ENCODE measurements at regions of chr4 and their contacts with region 1.

Region 1: DNA sequence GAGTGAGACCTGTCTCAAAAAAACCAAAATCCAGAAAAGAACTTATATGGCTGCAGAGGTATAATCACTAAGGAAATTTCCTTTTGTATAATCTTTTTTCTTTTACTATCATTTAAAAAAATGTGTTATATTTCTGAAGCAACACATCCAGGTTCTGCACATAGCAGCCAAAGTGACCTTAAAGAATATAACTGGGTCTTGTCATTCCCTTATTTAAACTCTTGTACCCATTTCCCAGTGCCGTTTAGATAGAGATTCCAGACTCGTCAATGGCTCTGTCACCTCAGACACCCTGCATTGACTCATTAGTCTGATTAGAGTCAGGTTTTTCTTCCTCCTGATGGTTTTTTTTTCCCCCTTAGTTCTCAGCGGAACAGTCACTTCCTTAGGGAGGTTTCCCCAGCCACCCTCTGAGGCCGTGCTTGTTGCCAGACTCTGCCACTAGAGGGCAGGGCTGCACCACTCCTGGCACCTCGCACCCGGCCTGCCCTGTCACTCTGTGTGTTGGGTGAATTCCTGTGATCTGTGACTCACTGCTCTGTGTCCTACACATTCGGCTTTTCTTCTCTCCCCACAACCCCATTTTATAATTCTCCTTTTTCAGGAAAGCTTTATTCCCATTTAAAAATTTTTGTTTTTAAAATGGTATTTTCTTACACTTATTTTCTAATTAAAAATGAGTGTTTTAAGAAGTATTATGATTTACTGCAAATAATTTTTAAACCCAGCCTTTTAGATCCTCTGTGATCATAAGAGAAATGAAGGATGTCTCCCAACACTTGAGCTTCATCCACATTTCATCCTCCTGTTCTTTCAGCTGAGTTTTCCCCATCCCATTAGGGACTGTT is 32.1 kb downstream of the HTT start:
- DNase-seq: peak; percentile 93
- ATAC-seq: peak; percentile 100
- H3K4me3 Mint-ChIP-seq: no peak overlapping the region
- H3K27ac Mint-ChIP-seq: peak overlapping the region; percentile 62
- H3K4me1 Mint-ChIP-seq: peaks cover 22% of the 10 kb centered on the region
- H3K27me3 Mint-ChIP-seq: no peaks in the 10 kb centered on the region
- CTCF ChIP-seq: peak; percentile 94

Region 2: GRCh38 chr4:3122081-3122563 is 15.6 kb after region 1 on chr4:
- CTCF ChIA-PET with region 1: interaction called, 31 read pairs
- POLR2A ChIA-PET with region 1: interaction called, 3 read pairs
- intact Hi-C with region 1: no loop called
- DNase-seq: no peak
- ATAC-seq: no peak
- H3K4me3 Mint-ChIP-seq: no peak overlapping the region
- H3K27ac Mint-ChIP-seq: peak overlapping the region; percentile 18
- H3K4me1 Mint-ChIP-seq: peaks cover 17% of the 10 kb centered on the region
- H3K27me3 Mint-ChIP-seq: no peaks in the 10 kb centered on the region
- CTCF ChIP-seq: no peak

Region 3: GRCh38 chr4:3136453-3136852 is 29.9 kb after region 1 on chr4:
- CTCF ChIA-PET with region 1: interaction called, 24 read pairs
- POLR2A ChIA-PET with region 1: interaction called, 3 read pairs
- intact Hi-C with region 1: no loop called
- DNase-seq: no peak
- ATAC-seq: no peak
- H3K4me3 Mint-ChIP-seq: no peak overlapping the region
- H3K27ac Mint-ChIP-seq: no peak overlapping the region
- H3K4me1 Mint-ChIP-seq: no peaks in the 10 kb centered on the region
- H3K27me3 Mint-ChIP-seq: no peaks in the 10 kb centered on the region
- CTCF ChIP-seq: peak; percentile 35

Region 4: DNA sequence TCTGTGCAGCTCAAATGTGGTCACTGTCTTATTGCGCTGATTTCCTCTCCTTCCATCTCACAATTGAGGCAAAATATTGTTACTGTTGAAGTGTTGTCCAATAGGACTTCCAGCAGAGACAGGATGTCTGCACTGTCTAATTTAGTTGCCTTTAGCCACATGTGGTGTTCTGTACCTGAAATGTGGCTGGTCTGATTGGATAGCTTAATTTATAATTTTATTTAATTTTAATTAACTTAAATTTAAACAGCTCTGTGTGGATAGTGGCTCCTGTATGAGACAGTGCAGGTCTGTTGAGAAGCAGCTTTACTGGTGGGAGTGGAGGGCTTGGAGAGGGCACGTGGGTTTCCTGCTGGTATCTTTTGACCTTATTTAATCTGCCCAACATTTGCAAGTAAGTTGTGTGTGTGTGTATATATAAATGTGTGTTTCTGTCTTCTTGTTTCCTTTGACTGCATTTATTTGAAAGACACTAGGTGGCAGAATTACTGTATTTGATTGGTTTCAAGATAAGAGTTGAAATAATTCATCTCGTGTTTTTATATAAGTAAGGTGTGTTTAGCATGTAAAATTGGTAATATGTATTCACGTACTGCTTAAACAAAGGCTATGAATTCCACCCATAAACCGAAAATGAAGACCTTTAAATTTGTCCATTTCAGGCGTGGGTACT is 87.1 kb after region 1 on chr4:
- CTCF ChIA-PET with region 1: interaction called, 23 read pairs
- POLR2A ChIA-PET with region 1: interaction called, 4 read pairs
- intact Hi-C with region 1: no loop called
- DNase-seq: no peak
- ATAC-seq: peak; percentile 31
- H3K4me3 Mint-ChIP-seq: no peak overlapping the region
- H3K27ac Mint-ChIP-seq: no peak overlapping the region
- H3K4me1 Mint-ChIP-seq: peaks cover 54% of the 10 kb centered on the region
- H3K27me3 Mint-ChIP-seq: no peaks in the 10 kb centered on the region
- CTCF ChIP-seq: peak; percentile 40

Region 5: GRCh38 chr4:3215261-3215660 is 108.7 kb after region 1 on chr4:
- CTCF ChIA-PET with region 1: no interaction called
- POLR2A ChIA-PET with region 1: no interaction called
- intact Hi-C with region 1: no loop called
- DNase-seq: no peak
- ATAC-seq: no peak
- H3K4me3 Mint-ChIP-seq: no peak overlapping the region
- H3K27ac Mint-ChIP-seq: no peak overlapping the region
- H3K4me1 Mint-ChIP-seq: peaks cover 2% of the 10 kb centered on the region
- H3K27me3 Mint-ChIP-seq: no peaks in the 10 kb centered on the region
- CTCF ChIP-seq: no peak

Region 6: GRCh38 chr4:3452376-3452775 is 345.8 kb after region 1 on chr4:
- CTCF ChIA-PET with region 1: interaction called, 3 read pairs
- POLR2A ChIA-PET with region 1: no interaction called
- intact Hi-C with region 1: loop called (anchors 10 kb)
- DNase-seq: no peak
- ATAC-seq: no peak
- H3K4me3 Mint-ChIP-seq: no peak overlapping the region
- H3K27ac Mint-ChIP-seq: no peak overlapping the region
- H3K4me1 Mint-ChIP-seq: no peaks in the 10 kb centered on the region
- H3K27me3 Mint-ChIP-seq: no peaks in the 10 kb centered on the region
- CTCF ChIP-seq: no peak

Measured in activated CD8-positive, alpha-beta T cell treated with anti-CD3 and anti-CD28 coated beads for 36 hours (primary cell).